ENCODE measurements at regions of chr20 and their contacts with region 1.

Region 1: GRCh38 chr20:44683263-44684046 is 31.7 kb upstream of the CCN5 start:
- DNase-seq: peak; percentile 75
- H3K4me3 ChIP-seq: no peak overlapping the region; a peak in 1 of 4 replicates
- H3K27ac ChIP-seq: no peak overlapping the region
- H3K4me1 ChIP-seq: peaks cover 0 to 10% of the 10 kb centered on the region in 2 experiments; a peak in 1 of 4 replicates
- H3K27me3 ChIP-seq: no peaks in the 10 kb centered on the region
- CTCF ChIP-seq: peak; percentile 77
- EP300 ChIP-seq: no peak
- RAD21 ChIP-seq: peak; percentile 70

Region 2: GRCh38 chr20:44609511-44610312 is 73.7 kb before region 1 on chr20:
- CTCF ChIA-PET with region 1: interaction called, 26 read pairs
- POLR2A ChIA-PET with region 1: no interaction called
- DNase-seq: peak; percentile 87
- H3K4me3 ChIP-seq: peak overlapping the region in 1 of 2 experiments; percentile 13; a peak in 1 of 4 replicates
- H3K27ac ChIP-seq: peak overlapping the region; percentile 55 to 65
- H3K4me1 ChIP-seq: peaks cover 0 to 10% of the 10 kb centered on the region in 2 experiments; a peak in 1 of 4 replicates
- H3K27me3 ChIP-seq: no peaks in the 10 kb centered on the region
- CTCF ChIP-seq: peak; percentile 98
- EP300 ChIP-seq: no peak
- RAD21 ChIP-seq: peak; percentile 99

Region 3: DNA sequence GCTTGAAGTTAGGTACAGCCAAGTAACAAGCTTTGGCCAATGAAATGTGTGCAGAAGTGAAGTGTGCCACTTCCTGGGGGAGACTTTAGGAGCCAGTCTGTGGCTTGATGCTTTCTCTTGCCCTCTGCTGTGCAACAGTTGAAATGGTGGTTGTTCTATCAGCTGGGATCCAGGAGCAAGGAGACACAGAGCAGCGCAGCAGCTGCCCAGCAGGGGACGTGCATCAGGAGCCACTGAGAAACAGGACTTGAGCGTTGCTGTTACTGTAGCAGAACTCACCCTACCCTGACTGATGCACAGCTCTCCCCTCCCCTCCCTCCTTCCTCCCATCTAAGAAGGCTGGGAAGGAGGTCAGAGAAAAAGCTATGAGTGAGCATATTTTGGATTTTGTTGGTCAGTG is 12.9 kb after region 1 on chr20:
- CTCF ChIA-PET with region 1: interaction called, 61 read pairs
- POLR2A ChIA-PET with region 1: no interaction called
- DNase-seq: no peak
- H3K4me3 ChIP-seq: no peak overlapping the region
- H3K27ac ChIP-seq: no peak overlapping the region; a peak in 1 of 4 replicates
- H3K4me1 ChIP-seq: peaks cover 13 to 19% of the 10 kb centered on the region in 2 experiments; a peak in 3 of 4 replicates
- H3K27me3 ChIP-seq: no peaks in the 10 kb centered on the region
- CTCF ChIP-seq: no peak
- EP300 ChIP-seq: no peak
- RAD21 ChIP-seq: no peak

Region 4: GRCh38 chr20:44720617-44720993 is 37.1 kb after region 1 on chr20:
- CTCF ChIA-PET with region 1: interaction called, 79 read pairs
- POLR2A ChIA-PET with region 1: no interaction called
- DNase-seq: peak; percentile 62
- H3K4me3 ChIP-seq: peak overlapping the region in 1 of 2 experiments; percentile 1; a peak in 1 of 4 replicates
- H3K27ac ChIP-seq: peak overlapping the region; percentile 53 to 91; a peak in 3 of 4 replicates
- H3K4me1 ChIP-seq: peaks cover 6 to 19% of the 10 kb centered on the region in 2 experiments; a peak in 3 of 4 replicates
- H3K27me3 ChIP-seq: no peaks in the 10 kb centered on the region
- CTCF ChIP-seq: no peak
- EP300 ChIP-seq: no peak
- RAD21 ChIP-seq: no peak

Region 5: DNA sequence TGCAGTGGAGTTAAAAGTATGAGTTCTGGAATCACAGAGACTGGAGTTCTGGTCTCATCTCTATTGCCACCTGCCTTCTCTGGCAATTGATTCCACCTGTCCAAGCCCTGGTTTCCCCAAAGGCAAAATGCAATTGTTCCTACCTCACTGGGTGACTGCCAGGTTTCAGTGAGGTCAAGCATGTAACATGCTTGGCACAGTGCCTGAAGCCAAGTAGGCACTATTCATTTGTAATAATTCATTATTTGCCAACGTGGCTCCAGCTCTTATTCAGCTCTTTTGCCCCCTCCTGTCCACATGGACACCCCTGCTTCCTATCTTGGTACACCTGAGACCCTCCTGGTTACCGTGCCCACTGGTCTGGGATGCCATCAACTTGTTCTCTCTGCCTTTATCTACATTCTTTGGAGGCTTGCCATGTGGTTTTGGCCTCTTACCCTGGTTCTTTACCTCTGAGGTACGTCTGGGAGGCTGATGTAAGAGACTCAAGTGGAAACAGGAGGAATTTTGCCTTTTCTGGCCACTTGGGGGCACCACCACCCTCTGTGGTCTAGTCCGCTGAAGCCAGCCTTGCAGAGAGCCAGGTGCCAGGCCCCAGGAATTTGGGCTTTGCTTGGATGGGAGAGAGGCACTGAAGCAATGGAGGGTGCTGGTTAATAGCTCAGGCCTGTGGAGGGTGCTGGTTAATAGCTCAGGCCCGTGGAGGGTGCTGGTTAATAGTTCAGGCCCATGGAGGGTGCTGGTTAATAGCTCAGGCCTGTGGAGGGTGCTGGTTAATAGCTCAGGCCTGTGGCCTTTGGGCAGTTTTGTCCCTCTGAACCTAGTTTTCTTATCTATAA is 63.9 kb after region 1 on chr20:
- CTCF ChIA-PET with region 1: interaction called, 55 read pairs
- POLR2A ChIA-PET with region 1: interaction called, 3 read pairs
- DNase-seq: peak; percentile 86
- H3K4me3 ChIP-seq: peak overlapping the region in 1 of 2 experiments; percentile 29; a peak in 1 of 4 replicates
- H3K27ac ChIP-seq: peak overlapping the region in 1 of 2 experiments; percentile 82; a peak in 2 of 4 replicates
- H3K4me1 ChIP-seq: peaks cover 6 to 37% of the 10 kb centered on the region in 2 experiments; a peak in 3 of 4 replicates
- H3K27me3 ChIP-seq: peaks cover 11% of the 10 kb centered on the region
- CTCF ChIP-seq: peak; percentile 78
- EP300 ChIP-seq: no peak
- RAD21 ChIP-seq: peak; percentile 75

Region 6: GRCh38 chr20:44866703-44867335 is 183.4 kb after region 1 on chr20:
- CTCF ChIA-PET with region 1: interaction called, 24 read pairs
- POLR2A ChIA-PET with region 1: no interaction called
- DNase-seq: no peak
- H3K4me3 ChIP-seq: no peak overlapping the region
- H3K27ac ChIP-seq: no peak overlapping the region
- H3K4me1 ChIP-seq: peaks cover 0 to 8% of the 10 kb centered on the region in 2 experiments; a peak in 1 of 4 replicates
- H3K27me3 ChIP-seq: no peaks in the 10 kb centered on the region
- CTCF ChIP-seq: no peak
- EP300 ChIP-seq: no peak
- RAD21 ChIP-seq: no peak

Measured in SK-N-SH (cell line).